ENCODE measurements at regions of chr9 and their contacts with region 1.

Region 1: GRCh38 chr9:21317956-21318923 is 13.1 kb upstream of the IFNA5 start:
- DNase-seq: peak; percentile 45
- H3K4me3 ChIP-seq: no peak overlapping the region
- H3K27ac ChIP-seq: no peak overlapping the region
- H3K4me1 ChIP-seq: peaks cover 10% of the 10 kb centered on the region
- H3K27me3 ChIP-seq: no peaks in the 10 kb centered on the region
- CTCF ChIP-seq: peak in 3 of 4 experiments; percentile 36 to 61 (median 59)
- POLR2A ChIP-seq: no peak

Region 2: GRCh38 chr9:19551124-19551929 is 1766.9 kb before region 1 on chr9:
- intact Hi-C with region 1: loop called (anchors 5 kb)
- DNase-seq: peak; percentile 49
- H3K4me3 ChIP-seq: peak overlapping the region; percentile 1 to 9
- H3K27ac ChIP-seq: peak overlapping the region; percentile 20 to 32
- H3K4me1 ChIP-seq: peaks cover 4% of the 10 kb centered on the region
- H3K27me3 ChIP-seq: no peaks in the 10 kb centered on the region
- CTCF ChIP-seq: peak in 1 of 4 experiments; percentile 19
- POLR2A ChIP-seq: no peak

Region 3: GRCh38 chr9:21119093-21119770 is 199.0 kb before region 1 on chr9:
- intact Hi-C with region 1: no loop called
- DNase-seq: no peak
- H3K4me3 ChIP-seq: no peak overlapping the region
- H3K27ac ChIP-seq: no peak overlapping the region
- H3K4me1 ChIP-seq: no peaks in the 10 kb centered on the region
- H3K27me3 ChIP-seq: no peaks in the 10 kb centered on the region
- CTCF ChIP-seq: no peak
- POLR2A ChIP-seq: no peak

Region 4: DNA sequence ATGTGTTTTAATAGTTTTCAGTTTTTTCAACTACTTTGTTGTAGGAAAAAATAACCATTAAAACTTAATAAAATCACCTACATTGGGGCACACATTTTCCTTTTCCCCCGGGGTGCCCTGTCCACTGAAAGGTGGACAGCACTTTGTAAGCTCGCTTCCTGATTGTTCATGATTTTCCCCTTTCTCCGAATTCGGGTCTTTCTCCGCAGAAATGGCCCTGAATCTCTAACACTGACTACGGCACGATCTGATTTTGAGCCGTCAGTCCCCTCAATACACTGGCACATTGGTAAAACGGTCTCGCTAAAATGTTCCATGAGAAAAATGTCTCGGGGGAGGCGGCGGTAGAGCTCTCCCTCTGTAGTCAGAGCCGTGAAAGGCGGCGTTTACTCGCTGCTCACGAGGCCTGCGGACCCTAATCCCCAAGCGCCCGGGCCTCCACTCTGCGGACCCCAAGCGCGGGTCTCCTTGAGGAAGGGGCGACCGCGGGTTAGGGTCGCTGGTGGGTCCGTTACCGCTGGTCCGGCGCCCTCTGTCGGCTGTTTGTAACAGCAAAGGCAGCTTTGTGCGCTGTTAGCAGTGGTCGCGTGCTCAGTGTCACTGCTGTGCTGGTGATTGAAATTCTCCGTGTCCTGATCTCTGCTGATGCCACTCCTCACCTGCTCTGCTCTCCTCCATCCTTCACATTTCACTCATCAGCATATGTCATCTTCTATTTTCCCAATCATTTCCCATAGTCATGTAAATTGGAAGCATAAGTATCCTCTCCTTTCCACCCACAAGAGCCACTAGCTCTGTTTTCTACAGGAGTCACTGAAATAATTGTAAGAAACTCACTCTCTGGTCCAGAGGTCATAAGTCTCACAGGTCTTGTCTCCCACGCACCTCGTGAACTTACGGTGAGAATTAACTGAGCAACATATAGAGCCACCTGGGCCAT is 77.8 kb after region 1 on chr9:
- intact Hi-C with region 1: loop called (anchors 5 kb)
- DNase-seq: peak; percentile 22
- H3K4me3 ChIP-seq: peak overlapping the region; percentile 15 to 18
- H3K27ac ChIP-seq: no peak overlapping the region
- H3K4me1 ChIP-seq: no peaks in the 10 kb centered on the region
- H3K27me3 ChIP-seq: no peaks in the 10 kb centered on the region
- CTCF ChIP-seq: peak; percentile 42 to 64 (median 60)
- POLR2A ChIP-seq: no peak

Region 5: GRCh38 chr9:21789541-21790037 is 471.3 kb after region 1 on chr9:
- intact Hi-C with region 1: loop called (anchors 5 kb)
- DNase-seq: peak; percentile 85
- H3K4me3 ChIP-seq: no peak overlapping the region
- H3K27ac ChIP-seq: no peak overlapping the region
- H3K4me1 ChIP-seq: no peaks in the 10 kb centered on the region
- H3K27me3 ChIP-seq: no peaks in the 10 kb centered on the region
- CTCF ChIP-seq: peak; percentile 57 to 92 (median 88)
- POLR2A ChIP-seq: no peak

Measured in prostate gland (tissue), 2 donors.